ENCODE measurements at regions of chr4 and their contacts with region 1.

Region 1: DNA sequence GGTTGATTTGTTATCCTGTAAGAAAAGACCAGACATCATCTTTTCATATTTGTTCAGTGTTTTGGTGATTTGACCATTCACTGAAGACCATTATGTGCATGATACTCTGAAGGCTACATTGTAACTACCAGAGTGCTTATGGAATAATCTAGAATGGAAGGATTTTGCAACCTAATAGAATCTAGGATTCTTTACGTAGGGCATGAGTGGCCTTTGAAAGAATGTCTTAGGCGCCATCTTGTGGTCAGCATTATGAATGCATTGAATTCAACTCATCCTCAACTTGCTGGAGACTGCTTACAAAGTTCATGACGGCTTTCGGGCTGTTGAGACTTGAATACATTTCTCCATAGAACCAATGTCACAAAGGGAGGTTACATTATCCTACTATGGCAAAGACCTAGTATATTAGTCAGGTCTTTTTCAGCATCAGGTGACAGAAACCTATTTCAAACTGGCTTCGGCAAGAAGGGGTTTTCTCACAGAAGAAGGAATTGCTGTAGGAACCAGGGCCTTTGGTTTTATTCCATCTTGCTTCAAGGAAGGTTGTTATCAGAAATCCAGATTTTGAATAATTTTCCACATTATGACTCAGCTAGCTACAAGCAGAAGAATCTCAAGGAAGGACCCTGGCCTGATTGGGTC is 104.1 kb downstream of the GPAT3 start:
- DNase-seq: peak; percentile 63 to 83 (median 66)
- ATAC-seq: peak; percentile 90
- H3K4me3 ChIP-seq: no peak overlapping the region
- H3K27ac ChIP-seq: no peak overlapping the region
- H3K4me1 ChIP-seq: no peaks in the 10 kb centered on the region
- H3K27me3 ChIP-seq: no peaks in the 10 kb centered on the region
- CTCF ChIP-seq: peak; percentile 63 to 94 (median 74); a peak in 5 of 6 replicates
- EP300 ChIP-seq: peak; percentile 39; the same call in 1 of the 2 replicates
- POLR2A ChIP-seq: no peak
- RAD21 ChIP-seq: peak; percentile 96 to 98

Region 2: GRCh38 chr4:83170952-83171399 is 469.0 kb before region 1 on chr4:
- CTCF ChIA-PET with region 1: no interaction called
- POLR2A ChIA-PET with region 1: no interaction called
- in situ Hi-C with region 1: no loop called
- intact Hi-C with region 1: no loop called
- DNase-seq: no peak
- ATAC-seq: no peak
- H3K4me3 ChIP-seq: no peak overlapping the region
- H3K27ac ChIP-seq: no peak overlapping the region
- H3K4me1 ChIP-seq: no peaks in the 10 kb centered on the region
- H3K27me3 ChIP-seq: peaks cover 0 to 6% of the 10 kb centered on the region in 2 experiments; a peak in 1 of 5 replicates
- CTCF ChIP-seq: no peak
- EP300 ChIP-seq: no peak
- POLR2A ChIP-seq: no peak
- RAD21 ChIP-seq: no peak

Region 3: GRCh38 chr4:83362492-83363329 is 277.3 kb before region 1 on chr4:
- CTCF ChIA-PET with region 1: interaction called, 4 read pairs
- POLR2A ChIA-PET with region 1: no interaction called
- in situ Hi-C with region 1: no loop called
- intact Hi-C with region 1: loop called (anchors 2 kb)
- DNase-seq: peak in 2 of 4 experiments; percentile 16 to 38
- ATAC-seq: peak; percentile 86
- H3K4me3 ChIP-seq: no peak overlapping the region
- H3K27ac ChIP-seq: no peak overlapping the region
- H3K4me1 ChIP-seq: peaks cover 0 to 7% of the 10 kb centered on the region in 2 experiments; a peak in 2 of 5 replicates
- H3K27me3 ChIP-seq: peaks cover 0 to 10% of the 10 kb centered on the region in 2 experiments; a peak in 4 of 5 replicates
- CTCF ChIP-seq: peak; percentile 24 to 60 (median 58); a peak in 5 of 6 replicates
- EP300 ChIP-seq: no peak
- POLR2A ChIP-seq: no peak
- RAD21 ChIP-seq: peak; percentile 23 to 57; a peak in 2 of 4 replicates

Region 4: GRCh38 chr4:83503974-83504373 is 136.0 kb before region 1 on chr4:
- CTCF ChIA-PET with region 1: interaction called, 20 read pairs
- POLR2A ChIA-PET with region 1: no interaction called
- in situ Hi-C with region 1: no loop called
- intact Hi-C with region 1: loop called (anchors 1 kb)
- DNase-seq: no peak
- ATAC-seq: no peak
- H3K4me3 ChIP-seq: no peak overlapping the region
- H3K27ac ChIP-seq: no peak overlapping the region
- H3K4me1 ChIP-seq: no peaks in the 10 kb centered on the region; a peak in 2 of 5 replicates
- H3K27me3 ChIP-seq: no peaks in the 10 kb centered on the region
- CTCF ChIP-seq: no peak
- EP300 ChIP-seq: no peak
- POLR2A ChIP-seq: no peak
- RAD21 ChIP-seq: no peak

Region 5: DNA sequence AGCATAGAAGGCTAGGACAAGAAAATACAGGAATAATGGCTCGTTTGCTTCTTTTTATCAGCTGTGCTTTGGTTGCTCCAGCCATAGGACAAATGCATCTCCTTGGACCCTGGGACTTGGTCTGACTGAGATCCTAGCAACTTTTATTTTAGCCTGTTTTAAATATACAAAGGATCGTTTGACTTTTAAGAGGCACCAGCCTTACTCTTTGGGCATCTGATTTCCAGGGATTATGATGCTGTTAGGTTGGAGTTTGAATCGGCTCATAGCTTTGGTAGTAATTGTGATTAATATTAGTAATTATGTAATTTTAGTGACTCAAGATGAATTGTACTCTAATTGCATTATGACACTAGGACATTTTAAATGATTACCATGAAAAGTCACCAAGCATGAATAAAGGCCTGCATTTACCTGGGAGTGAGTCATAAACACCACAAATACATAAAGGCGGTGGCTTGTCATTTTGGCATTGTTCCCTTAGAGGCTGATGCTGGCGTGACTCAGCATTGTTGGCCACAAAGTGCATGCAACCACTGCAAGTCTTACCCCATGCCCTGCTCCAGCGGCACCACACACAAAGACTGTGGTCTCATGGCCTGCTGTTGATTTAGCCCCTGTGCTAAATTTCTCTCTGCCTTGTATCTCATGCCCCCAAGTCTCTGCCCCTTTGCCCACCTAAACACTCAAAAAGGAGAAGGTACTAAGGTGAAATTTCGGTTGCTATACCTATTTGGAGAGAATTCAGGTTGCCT is 91.6 kb before region 1 on chr4:
- CTCF ChIA-PET with region 1: no interaction called
- POLR2A ChIA-PET with region 1: no interaction called
- in situ Hi-C with region 1: no loop called
- intact Hi-C with region 1: loop called (anchors 10 kb)
- DNase-seq: peak; percentile 77 to 93 (median 84)
- ATAC-seq: peak; percentile 94
- H3K4me3 ChIP-seq: no peak overlapping the region
- H3K27ac ChIP-seq: peak overlapping the region; percentile 70
- H3K4me1 ChIP-seq: peaks cover 8 to 27% of the 10 kb centered on the region in 2 experiments; a peak in 4 of 5 replicates
- H3K27me3 ChIP-seq: no peaks in the 10 kb centered on the region
- CTCF ChIP-seq: no peak
- EP300 ChIP-seq: peak; percentile 73; the same call in 1 of the 2 replicates
- POLR2A ChIP-seq: no peak
- RAD21 ChIP-seq: no peak

Region 6: DNA sequence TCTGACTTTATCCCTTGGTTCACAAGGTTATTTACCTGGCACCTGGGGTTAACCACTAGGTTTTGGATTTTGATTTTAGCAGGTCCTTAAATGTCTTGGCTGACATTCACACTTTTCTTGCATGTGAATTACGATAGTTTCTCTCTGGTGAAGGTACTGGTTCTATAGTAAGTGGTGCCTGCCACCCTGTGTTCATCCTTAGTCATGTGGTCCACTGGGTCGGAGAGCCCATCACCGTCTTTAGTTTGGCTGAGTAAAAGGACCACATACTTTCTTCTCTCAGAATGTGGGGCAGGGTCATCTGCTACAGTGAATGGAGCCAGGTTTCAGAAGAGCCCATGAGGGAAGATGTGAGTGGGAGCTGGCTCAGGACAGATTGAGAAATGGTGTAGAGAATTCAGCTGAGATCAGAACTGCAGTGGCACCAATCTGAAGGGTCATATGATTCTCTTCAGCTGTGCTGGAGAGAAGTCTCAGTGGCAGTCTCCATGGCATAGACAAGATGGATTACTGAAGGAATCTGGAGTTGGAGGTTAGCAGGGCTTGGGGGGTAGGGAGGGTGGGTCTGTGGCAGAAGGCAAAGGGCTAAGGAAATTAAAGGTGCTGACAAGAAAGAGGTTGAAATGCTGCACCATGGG is 206.3 kb after region 1 on chr4:
- CTCF ChIA-PET with region 1: no interaction called
- POLR2A ChIA-PET with region 1: no interaction called
- in situ Hi-C with region 1: no loop called
- intact Hi-C with region 1: loop called (anchors 5 kb)
- DNase-seq: no peak
- ATAC-seq: no peak
- H3K4me3 ChIP-seq: no peak overlapping the region
- H3K27ac ChIP-seq: no peak overlapping the region
- H3K4me1 ChIP-seq: no peaks in the 10 kb centered on the region
- H3K27me3 ChIP-seq: peaks cover 0 to 3% of the 10 kb centered on the region in 2 experiments; a peak in 1 of 5 replicates
- CTCF ChIP-seq: peak in 2 of 3 experiments; percentile 22 to 34; a peak in 2 of 6 replicates
- EP300 ChIP-seq: no peak
- POLR2A ChIP-seq: no peak
- RAD21 ChIP-seq: peak; percentile 20 to 49; a peak in 2 of 4 replicates

Region 7: DNA sequence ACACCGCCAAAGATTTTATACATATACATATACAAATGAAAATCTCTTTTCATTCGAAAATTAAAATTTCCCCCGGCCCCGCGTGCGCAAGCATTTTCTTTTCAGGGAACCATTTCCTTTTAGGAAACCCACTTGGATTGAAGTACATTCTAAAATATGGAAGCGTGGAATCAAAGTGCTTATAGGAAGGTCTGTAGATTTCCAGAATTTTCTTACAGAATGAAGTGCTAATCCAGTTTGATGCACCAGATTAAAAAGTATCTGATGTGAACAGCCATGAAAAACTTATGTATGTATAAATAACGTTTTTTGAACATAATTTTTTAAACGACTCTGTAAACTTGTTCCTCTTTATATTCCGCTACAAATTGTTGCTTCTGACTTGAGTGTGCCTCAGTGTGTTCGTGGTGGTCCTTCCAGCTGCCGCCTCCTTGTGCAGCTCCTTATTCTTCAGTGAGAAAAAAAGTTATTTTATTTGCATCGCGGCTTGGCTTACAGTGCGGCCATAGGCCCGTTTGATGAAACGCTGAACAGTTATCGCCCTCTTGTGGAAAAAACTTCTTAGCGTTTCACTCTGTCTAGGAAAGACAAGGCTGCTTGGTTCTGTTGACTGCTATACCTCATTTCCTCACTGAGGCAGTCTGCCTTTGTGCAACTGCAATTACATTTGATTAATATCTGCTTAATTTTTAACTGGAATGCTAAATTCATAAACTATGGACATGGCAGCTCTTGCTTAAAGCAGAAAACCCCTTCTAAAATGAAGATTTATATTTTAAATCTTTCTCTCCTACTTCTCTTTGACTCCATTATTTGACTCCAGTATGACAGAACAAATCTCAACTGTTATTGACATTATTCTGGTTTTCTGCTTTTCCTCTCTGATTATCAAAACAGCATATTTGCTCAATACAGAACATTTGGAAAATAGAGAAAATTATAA is 863.8 kb after region 1 on chr4:
- CTCF ChIA-PET with region 1: interaction called, 7 read pairs
- POLR2A ChIA-PET with region 1: no interaction called
- in situ Hi-C with region 1: loop called (anchors 10 kb)
- intact Hi-C with region 1: no loop called
- DNase-seq: peak; percentile 52 to 68 (median 62)
- ATAC-seq: peak; percentile 99
- H3K4me3 ChIP-seq: no peak overlapping the region
- H3K27ac ChIP-seq: no peak overlapping the region
- H3K4me1 ChIP-seq: peaks cover 0 to 7% of the 10 kb centered on the region in 2 experiments; a peak in 2 of 5 replicates
- H3K27me3 ChIP-seq: peaks cover 30 to 32% of the 10 kb centered on the region in 2 experiments
- CTCF ChIP-seq: peak; percentile 65 to 76 (median 72)
- EP300 ChIP-seq: no peak
- POLR2A ChIP-seq: no peak
- RAD21 ChIP-seq: peak; percentile 64 to 78

Measured in K562 (cell line).